ENCODE measurements at regions of chr22 and their contacts with region 1.

Region 1: GRCh38 chr22:33920927-33921524 is 750 bp upstream of the LARGE1 start:
- DNase-seq: peak; percentile 98 to 100 (median 99)
- H3K4me3 ChIP-seq: peak overlapping the region; percentile 92
- H3K27ac ChIP-seq: peak overlapping the region; percentile 80 to 87
- H3K4me1 ChIP-seq: peaks cover 5% of the 10 kb centered on the region
- H3K27me3 ChIP-seq: no peaks in the 10 kb centered on the region
- CTCF ChIP-seq: no peak
- EP300 ChIP-seq: no peak
- POLR2A ChIP-seq: peak; percentile 37

Region 2: GRCh38 chr22:33519071-33519973 is 401.7 kb before region 1 on chr22:
- intact Hi-C with region 1: loop called in 3 of 4 experiments (anchors 5 to 10 kb)
- DNase-seq: peak; percentile 36 to 67 (median 46)
- H3K4me3 ChIP-seq: no peak overlapping the region
- H3K27ac ChIP-seq: peak overlapping the region in 1 of 2 donors; percentile 8
- H3K4me1 ChIP-seq: no peaks in the 10 kb centered on the region
- H3K27me3 ChIP-seq: no peaks in the 10 kb centered on the region
- CTCF ChIP-seq: peak; percentile 54 to 66 (median 64)
- EP300 ChIP-seq: no peak
- POLR2A ChIP-seq: no peak

Region 3: GRCh38 chr22:33639588-33640254 is 281.3 kb before region 1 on chr22:
- intact Hi-C with region 1: no loop called
- DNase-seq: no peak
- H3K4me3 ChIP-seq: no peak overlapping the region
- H3K27ac ChIP-seq: no peak overlapping the region
- H3K4me1 ChIP-seq: no peaks in the 10 kb centered on the region
- H3K27me3 ChIP-seq: no peaks in the 10 kb centered on the region
- CTCF ChIP-seq: no peak
- EP300 ChIP-seq: no peak
- POLR2A ChIP-seq: no peak

Region 4: DNA sequence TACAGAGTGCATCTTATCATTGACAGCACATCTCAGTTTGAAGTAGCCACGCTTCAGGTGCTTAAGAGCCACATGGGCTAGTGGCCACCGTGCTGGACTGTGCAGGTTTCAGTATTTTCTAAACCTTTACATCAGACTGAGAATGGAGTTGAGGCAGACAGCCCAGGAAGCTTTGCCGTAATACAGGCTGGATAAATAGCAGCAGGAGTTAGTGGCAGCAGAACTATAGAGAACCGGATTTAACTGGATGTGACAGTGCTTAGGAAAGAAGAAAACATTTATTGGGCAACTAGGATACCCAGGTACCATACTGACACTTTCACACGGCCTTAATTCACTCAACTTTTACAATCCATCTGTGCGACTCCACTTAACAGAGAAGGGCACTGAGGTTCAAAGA is 146.2 kb before region 1 on chr22:
- intact Hi-C with region 1: loop called in 1 of 4 experiments (anchors 5 kb)
- DNase-seq: no peak
- H3K4me3 ChIP-seq: no peak overlapping the region
- H3K27ac ChIP-seq: no peak overlapping the region
- H3K4me1 ChIP-seq: peaks cover 11% of the 10 kb centered on the region
- H3K27me3 ChIP-seq: no peaks in the 10 kb centered on the region
- CTCF ChIP-seq: no peak
- EP300 ChIP-seq: no peak
- POLR2A ChIP-seq: no peak

Region 5: DNA sequence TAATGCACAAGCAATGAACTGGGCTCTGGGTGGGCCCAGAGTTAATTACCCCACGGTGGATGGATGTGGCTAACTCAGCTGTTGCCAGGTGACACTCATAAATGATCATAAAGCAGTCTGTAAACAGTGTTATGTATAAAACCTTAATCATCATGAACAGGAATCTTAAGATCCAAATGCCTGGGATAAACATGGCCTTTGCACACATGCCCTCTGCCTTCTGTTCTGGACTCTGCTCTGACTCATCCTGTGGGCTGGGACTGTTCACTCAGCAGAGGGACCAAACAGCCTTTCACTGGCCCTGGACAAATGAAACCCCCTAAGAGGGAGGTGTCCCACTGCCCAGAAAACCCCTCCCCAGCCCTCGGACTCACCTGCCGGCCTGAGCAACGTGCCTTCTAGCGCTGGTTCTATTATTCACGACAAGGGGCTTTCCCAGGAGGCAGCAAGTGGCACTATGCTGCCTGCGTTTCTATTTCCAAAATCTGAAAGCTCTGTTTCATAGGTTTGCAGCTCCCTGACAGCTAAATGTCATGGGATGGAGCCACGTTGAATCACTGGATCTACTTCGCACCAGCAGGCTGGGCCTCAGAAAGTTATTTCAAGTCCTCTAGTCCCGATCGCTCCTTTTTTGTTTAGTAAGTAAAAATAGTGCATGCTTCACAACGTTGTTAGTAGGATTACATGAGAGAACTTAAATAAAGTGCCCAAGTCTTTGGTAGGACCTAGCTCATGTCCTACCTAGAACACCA is 53.7 kb before region 1 on chr22:
- intact Hi-C with region 1: no loop called
- DNase-seq: no peak
- H3K4me3 ChIP-seq: no peak overlapping the region
- H3K27ac ChIP-seq: no peak overlapping the region
- H3K4me1 ChIP-seq: peaks cover 22% of the 10 kb centered on the region
- H3K27me3 ChIP-seq: no peaks in the 10 kb centered on the region
- CTCF ChIP-seq: no peak
- EP300 ChIP-seq: no peak
- POLR2A ChIP-seq: no peak

Region 6: DNA sequence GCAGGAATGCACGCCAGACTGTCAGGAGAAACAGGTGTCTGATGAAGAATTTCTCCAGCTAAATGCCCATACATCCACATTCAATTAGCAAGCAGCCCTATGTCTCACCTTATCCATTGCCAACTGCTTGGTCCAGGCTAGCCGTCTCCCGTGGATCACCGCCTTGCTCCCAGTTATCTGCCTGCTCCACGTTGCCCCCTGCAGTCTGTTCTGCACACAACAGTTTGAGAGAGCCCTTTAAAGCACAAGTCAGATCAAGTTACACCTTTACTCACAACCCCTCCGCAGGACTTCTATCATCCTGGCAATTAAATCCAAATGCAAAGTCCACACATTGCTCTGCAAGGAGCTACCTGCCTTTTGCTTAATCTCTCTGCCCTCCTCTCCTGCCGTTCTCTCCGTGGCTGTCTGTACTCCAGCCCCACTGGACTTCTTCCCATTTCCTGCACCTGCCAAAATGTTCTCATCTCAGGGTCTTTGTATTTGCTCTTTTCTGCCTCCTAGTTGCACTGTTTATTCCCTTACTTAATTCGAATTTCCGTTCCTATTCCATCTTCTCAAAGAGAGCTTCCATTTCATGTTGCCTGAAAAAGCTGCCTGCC is 184.5 kb after region 1 on chr22:
- intact Hi-C with region 1: loop called in 3 of 4 experiments (anchors 10 kb)
- DNase-seq: peak; percentile 9 to 57 (median 44)
- H3K4me3 ChIP-seq: no peak overlapping the region
- H3K27ac ChIP-seq: no peak overlapping the region
- H3K4me1 ChIP-seq: no peaks in the 10 kb centered on the region
- H3K27me3 ChIP-seq: no peaks in the 10 kb centered on the region
- CTCF ChIP-seq: peak in 1 of 3 donors; percentile 16
- EP300 ChIP-seq: no peak
- POLR2A ChIP-seq: no peak

Region 7: DNA sequence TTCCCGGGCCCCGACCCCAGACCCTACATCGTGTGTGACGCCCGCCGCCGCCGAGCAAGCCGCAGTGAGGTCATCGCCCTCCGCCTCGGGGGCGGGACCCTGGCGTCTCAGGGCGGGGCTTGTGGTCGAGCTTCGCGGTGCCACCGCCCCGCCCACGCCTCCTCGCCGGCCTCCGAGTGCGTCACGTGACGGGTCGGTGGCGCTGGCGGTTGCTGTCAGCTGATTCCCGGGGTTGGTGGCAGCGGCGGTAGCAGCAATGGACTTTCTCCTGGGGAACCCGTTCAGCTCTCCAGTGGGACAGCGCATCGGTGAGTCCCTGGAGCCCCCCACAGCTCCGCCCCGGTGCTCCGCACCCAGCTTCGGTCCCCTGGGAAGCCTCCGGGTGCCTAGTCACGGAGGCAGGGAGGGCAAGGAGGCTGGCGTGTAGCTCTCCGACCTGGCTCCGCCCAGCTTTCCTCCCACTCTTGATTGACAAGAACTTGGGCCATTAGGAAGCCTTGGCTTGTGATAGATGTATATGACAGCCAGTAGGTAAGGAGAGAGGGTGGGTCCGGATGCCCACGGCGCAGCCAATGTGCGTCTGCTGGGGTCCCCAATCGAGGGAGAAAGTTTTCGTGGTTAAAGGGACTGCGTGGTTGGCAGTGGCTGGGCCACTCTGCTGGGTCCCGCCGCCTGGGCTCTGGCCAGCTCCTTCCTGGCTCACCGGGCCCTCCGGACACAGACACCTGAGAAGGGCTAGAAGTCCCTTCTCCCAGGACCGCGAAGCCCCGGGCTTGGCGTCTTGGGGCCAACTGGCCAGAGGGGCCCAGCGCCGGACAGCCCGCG is 1378.9 kb after region 1 on chr22 and contains the start of gene TOM1:
- intact Hi-C with region 1: loop called in 1 of 4 experiments (anchors 10 kb)
- DNase-seq: peak; percentile 96 to 97 (median 96)
- H3K4me3 ChIP-seq: peak within 1 kb of the TSS; percentile 95
- H3K27ac ChIP-seq: peak within 1 kb of the TSS; percentile 80 to 87
- H3K4me1 ChIP-seq: no peaks in the 10 kb centered on the region
- H3K27me3 ChIP-seq: no peaks in the 10 kb centered on the region
- CTCF ChIP-seq: no peak
- EP300 ChIP-seq: peak; percentile 5
- POLR2A ChIP-seq: peak; percentile 85
- total RNA-seq, gene TOM1: 35.1 to 48.9 (median 41.9) TPM

Measured in ovary (tissue), 10 donors.